ENCODE measurements at regions of chr18 and their contacts with region 1.

Region 1: GRCh38 chr18:33673689-33674088 is 95.7 kb downstream of the ASXL3 start:
- DNase-seq: no peak
- ATAC-seq: no peak
- H3K4me3 ChIP-seq: no peak overlapping the region
- H3K27ac ChIP-seq: no peak overlapping the region
- H3K4me1 ChIP-seq: no peaks in the 10 kb centered on the region
- H3K27me3 ChIP-seq: no peaks in the 10 kb centered on the region
- CTCF ChIP-seq: no peak

Region 2: DNA sequence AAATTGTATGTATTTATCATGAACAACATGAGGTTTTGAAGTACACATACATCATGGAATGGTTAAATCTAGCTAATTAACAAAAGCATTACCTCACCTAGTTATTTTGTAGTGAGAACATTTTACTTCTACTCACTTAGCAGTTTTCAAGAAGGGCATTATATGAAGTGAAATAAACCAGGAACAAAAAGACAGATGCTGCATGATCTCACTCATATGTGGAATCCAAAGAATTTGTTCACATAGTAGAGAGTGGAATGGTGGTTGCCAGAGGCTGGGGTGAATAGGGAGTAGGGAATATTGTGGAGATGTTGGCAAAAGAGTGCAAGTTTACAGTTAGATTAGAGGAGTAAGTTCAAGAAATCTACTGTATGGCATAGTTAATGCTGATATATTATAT is 196.4 kb after region 1 on chr18:
- CTCF ChIA-PET with region 1: no interaction called
- POLR2A ChIA-PET with region 1: interaction called, 12 read pairs
- in situ Hi-C with region 1: no loop called
- intact Hi-C with region 1: no loop called
- DNase-seq: no peak
- ATAC-seq: no peak
- H3K4me3 ChIP-seq: no peak overlapping the region
- H3K27ac ChIP-seq: no peak overlapping the region
- H3K4me1 ChIP-seq: no peaks in the 10 kb centered on the region
- H3K27me3 ChIP-seq: no peaks in the 10 kb centered on the region
- CTCF ChIP-seq: no peak